CD8-positive, alpha-beta memory T cell (primary cell): ENCODE measurements at regions of chr18 and their contacts with region 1.

Region 1: DNA sequence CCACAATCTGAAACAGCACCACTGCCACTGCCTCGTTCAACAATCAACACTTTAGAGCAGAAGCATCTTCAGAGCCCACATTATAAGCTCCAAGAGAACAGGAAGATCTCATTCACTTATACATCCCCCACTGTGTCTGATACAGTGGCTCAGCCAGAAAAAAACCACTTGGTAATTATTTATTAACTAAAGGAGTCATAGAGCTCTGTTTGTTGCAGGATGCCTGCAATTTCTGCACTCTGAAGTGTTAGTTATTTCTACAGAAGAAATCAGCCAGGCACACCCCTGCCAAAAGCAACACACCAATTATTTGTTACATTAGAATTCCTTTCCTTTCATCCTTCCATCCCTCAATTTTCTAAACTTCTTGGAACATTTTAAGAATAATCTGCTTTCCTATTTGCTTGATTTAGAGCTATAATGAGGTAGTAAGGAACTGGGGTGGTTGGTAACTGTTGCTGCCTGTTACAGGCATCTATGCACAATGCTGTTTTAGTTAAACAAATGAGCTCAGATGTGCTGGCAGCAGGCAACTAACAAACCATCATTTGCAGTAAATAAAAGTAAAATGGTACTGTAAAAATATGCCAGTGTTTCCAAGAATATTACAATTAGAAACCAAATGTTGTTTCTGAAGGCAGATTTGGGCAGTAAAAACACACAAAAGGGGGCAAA is 59.9 kb downstream of the DYM start:
- DNase-seq: no peak
- H3K4me3 ChIP-seq: no peak overlapping the region
- H3K4me3 Mint-ChIP-seq: peak overlapping the region in 2 of 7 donors; percentile 27 to 28
- H3K27ac ChIP-seq: no peak overlapping the region
- H3K27ac Mint-ChIP-seq: peak overlapping the region; percentile 13 to 89 (median 74)
- H3K4me1 ChIP-seq: peaks cover 36% of the 10 kb centered on the region
- H3K4me1 Mint-ChIP-seq: peaks cover 47 to 59% (median 57%) of the 10 kb centered on the region in 3 donors
- H3K27me3 ChIP-seq: no peaks in the 10 kb centered on the region
- H3K27me3 Mint-ChIP-seq: no peaks in the 10 kb centered on the region

Region 2: GRCh38 chr18:49321800-49322461 is 78.6 kb before region 1 on chr18:
- CTCF ChIA-PET with region 1: no interaction called
- POLR2A ChIA-PET with region 1: no interaction called
- DNase-seq: no peak
- H3K4me3 ChIP-seq: no peak overlapping the region
- H3K4me3 Mint-ChIP-seq: no peak overlapping the region
- H3K27ac ChIP-seq: no peak overlapping the region
- H3K27ac Mint-ChIP-seq: no peak overlapping the region
- H3K4me1 ChIP-seq: no peaks in the 10 kb centered on the region
- H3K4me1 Mint-ChIP-seq: peaks cover 18 to 28% (median 24%) of the 10 kb centered on the region in 3 donors
- H3K27me3 ChIP-seq: no peaks in the 10 kb centered on the region
- H3K27me3 Mint-ChIP-seq: no peaks in the 10 kb centered on the region

Region 3: GRCh38 chr18:49819823-49820671 is 419.5 kb after region 1 on chr18:
- CTCF ChIA-PET with region 1: no interaction called
- POLR2A ChIA-PET with region 1: interaction called, 10 read pairs
- DNase-seq: peak; percentile 12 to 75 (median 69)
- H3K4me3 ChIP-seq: peak overlapping the region; percentile 34
- H3K4me3 Mint-ChIP-seq: peak overlapping the region; percentile 45 to 83 (median 77)
- H3K27ac ChIP-seq: peak overlapping the region; percentile 4
- H3K27ac Mint-ChIP-seq: peak overlapping the region; percentile 47 to 98 (median 86)
- H3K4me1 ChIP-seq: peaks cover 54% of the 10 kb centered on the region
- H3K4me1 Mint-ChIP-seq: peaks cover 61 to 74% (median 65%) of the 10 kb centered on the region in 3 donors
- H3K27me3 ChIP-seq: no peaks in the 10 kb centered on the region
- H3K27me3 Mint-ChIP-seq: no peaks in the 10 kb centered on the region